Activated B cell treated with CpG ODN at 0.5 μM for 24 hours (primary cell): ENCODE measurements at regions of chr15 and their contacts with region 1.

Region 1: GRCh38 chr15:99565299-99566156 is at the start of gene MEF2A:
- DNase-seq: peak; percentile 90
- ATAC-seq: peak; percentile 65
- H3K4me3 Mint-ChIP-seq: peak within 1 kb of the TSS; percentile 100
- H3K27ac Mint-ChIP-seq: peak within 1 kb of the TSS; percentile 99
- H3K4me1 Mint-ChIP-seq: peaks cover 55% of the 10 kb centered on the region
- H3K27me3 Mint-ChIP-seq: no peaks in the 10 kb centered on the region
- CTCF ChIP-seq: no peak
- total RNA-seq, gene MEF2A: 75.7 and 88.3 TPM in 2 replicates

Region 2: GRCh38 chr15:99282121-99282520 is 283.4 kb before region 1 on chr15:
- CTCF ChIA-PET with region 1: interaction called, 4 read pairs
- POLR2A ChIA-PET with region 1: no interaction called
- intact Hi-C with region 1: loop called (anchors 5 kb)
- DNase-seq: no peak
- ATAC-seq: no peak
- H3K4me3 Mint-ChIP-seq: no peak overlapping the region
- H3K27ac Mint-ChIP-seq: no peak overlapping the region
- H3K4me1 Mint-ChIP-seq: peaks cover 11% of the 10 kb centered on the region
- H3K27me3 Mint-ChIP-seq: no peaks in the 10 kb centered on the region
- CTCF ChIP-seq: no peak

Region 3: GRCh38 chr15:99442252-99442897 is 123.2 kb before region 1 on chr15:
- CTCF ChIA-PET with region 1: no interaction called
- POLR2A ChIA-PET with region 1: interaction called, 6 read pairs
- intact Hi-C with region 1: loop called (anchors 5 kb)
- DNase-seq: peak; percentile 14
- ATAC-seq: peak; percentile 64
- H3K4me3 Mint-ChIP-seq: peak overlapping the region; percentile 53
- H3K27ac Mint-ChIP-seq: peak overlapping the region; percentile 52
- H3K4me1 Mint-ChIP-seq: peaks cover 37% of the 10 kb centered on the region
- H3K27me3 Mint-ChIP-seq: no peaks in the 10 kb centered on the region
- CTCF ChIP-seq: no peak

Region 4: DNA sequence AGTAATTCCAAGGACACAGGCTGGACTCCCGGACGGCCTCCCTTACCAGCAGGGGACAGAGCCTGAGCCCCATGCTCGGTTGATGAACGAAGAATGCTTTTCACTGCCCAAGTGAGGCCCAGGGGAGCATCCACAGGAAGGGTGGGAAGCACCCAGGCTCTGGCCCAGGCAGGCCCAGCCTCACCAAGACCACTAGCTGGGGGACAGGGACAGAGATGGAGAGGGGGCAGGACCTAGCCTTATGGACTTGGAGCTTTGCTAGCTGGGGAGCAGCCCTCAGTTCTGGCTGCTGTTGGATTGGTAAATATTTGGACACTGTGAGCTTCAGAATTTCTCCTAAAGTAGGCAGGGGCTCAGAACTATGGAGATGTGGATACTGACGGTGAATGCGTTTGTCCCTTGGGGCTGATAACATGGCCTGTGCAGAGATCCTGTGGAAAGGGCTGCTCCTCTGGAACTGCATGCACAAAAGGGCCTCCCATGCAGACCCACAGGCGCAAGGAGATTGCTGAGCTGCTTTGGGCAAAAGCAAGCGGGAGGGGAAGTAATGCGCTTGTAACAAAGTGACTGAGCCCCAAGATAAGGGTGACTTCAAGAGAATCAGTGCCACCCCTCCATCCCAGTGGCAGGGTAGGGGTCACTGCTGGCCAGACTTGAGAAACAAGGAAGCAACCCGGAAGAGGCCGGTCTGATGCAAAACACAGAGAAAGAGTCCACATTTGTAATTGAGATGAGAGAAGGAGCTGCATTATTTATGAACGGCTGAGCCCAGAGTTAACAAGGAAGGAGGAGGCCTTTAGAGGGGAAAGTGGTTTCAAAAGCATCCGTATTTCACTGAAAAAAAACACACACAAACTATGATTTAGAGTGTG is 69.9 kb before region 1 on chr15:
- CTCF ChIA-PET with region 1: interaction called, 3 read pairs
- POLR2A ChIA-PET with region 1: interaction called, 157 read pairs
- intact Hi-C with region 1: no loop called
- DNase-seq: no peak
- ATAC-seq: peak; percentile 28
- H3K4me3 Mint-ChIP-seq: peak overlapping the region; percentile 59
- H3K27ac Mint-ChIP-seq: peak overlapping the region; percentile 63
- H3K4me1 Mint-ChIP-seq: peaks cover 27% of the 10 kb centered on the region
- H3K27me3 Mint-ChIP-seq: no peaks in the 10 kb centered on the region
- CTCF ChIP-seq: no peak

Region 5: DNA sequence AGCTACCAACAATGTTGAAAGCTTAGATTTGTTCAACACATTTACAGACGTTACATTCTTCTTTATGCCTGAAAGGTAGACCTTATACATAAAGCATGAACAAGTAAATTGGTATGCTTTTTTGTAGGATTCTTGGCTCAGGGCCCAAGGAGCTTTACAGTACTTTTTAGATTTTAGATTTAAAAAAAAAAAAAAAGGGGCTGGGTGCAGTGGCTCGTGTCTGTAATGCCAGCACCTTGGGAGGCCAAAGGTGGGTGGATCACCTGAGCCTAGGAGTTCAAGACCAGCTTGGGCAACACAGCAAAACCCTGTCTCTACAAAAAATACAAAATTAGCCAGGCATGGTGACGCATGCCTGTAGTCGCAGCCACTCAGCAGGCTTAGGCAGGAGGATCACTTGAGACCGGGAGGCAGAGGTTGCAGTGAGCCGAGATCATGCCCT is 40.0 kb after region 1 on chr15:
- CTCF ChIA-PET with region 1: no interaction called
- POLR2A ChIA-PET with region 1: interaction called, 12 read pairs
- intact Hi-C with region 1: loop called (anchors 2 kb)
- DNase-seq: no peak
- ATAC-seq: no peak
- H3K4me3 Mint-ChIP-seq: peak overlapping the region; percentile 55
- H3K27ac Mint-ChIP-seq: peak overlapping the region; percentile 67
- H3K4me1 Mint-ChIP-seq: peaks cover 73% of the 10 kb centered on the region
- H3K27me3 Mint-ChIP-seq: no peaks in the 10 kb centered on the region
- CTCF ChIP-seq: no peak

Region 6: DNA sequence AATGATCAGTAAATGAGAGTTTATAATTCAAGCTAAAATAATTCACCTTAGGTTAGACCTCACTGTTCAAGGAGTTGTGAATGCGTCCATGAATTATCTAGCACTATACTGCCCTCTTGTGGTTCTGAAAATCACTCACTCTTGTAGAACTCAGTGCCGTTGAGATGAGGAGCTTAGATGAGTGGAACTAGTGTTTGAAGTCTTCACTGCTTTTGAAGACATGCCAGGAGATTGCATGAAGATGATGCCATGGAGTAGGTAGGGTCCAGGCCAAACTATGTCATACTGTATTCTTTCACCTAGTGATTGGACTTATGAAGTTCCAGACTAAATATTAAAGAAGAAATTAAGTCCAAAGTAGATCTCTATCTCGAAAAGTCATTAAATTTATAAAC is 138.9 kb after region 1 on chr15:
- CTCF ChIA-PET with region 1: interaction called, 35 read pairs
- POLR2A ChIA-PET with region 1: interaction called, 45 read pairs
- intact Hi-C with region 1: loop called (anchors 1 kb)
- DNase-seq: no peak
- ATAC-seq: peak; percentile 83
- H3K4me3 Mint-ChIP-seq: no peak overlapping the region
- H3K27ac Mint-ChIP-seq: peak overlapping the region; percentile 24
- H3K4me1 Mint-ChIP-seq: peaks cover 27% of the 10 kb centered on the region
- H3K27me3 Mint-ChIP-seq: no peaks in the 10 kb centered on the region
- CTCF ChIP-seq: no peak

Region 7: GRCh38 chr15:99878835-99879234 is 313.3 kb after region 1 on chr15:
- CTCF ChIA-PET with region 1: no interaction called
- POLR2A ChIA-PET with region 1: no interaction called
- intact Hi-C with region 1: no loop called
- DNase-seq: no peak
- ATAC-seq: no peak
- H3K4me3 Mint-ChIP-seq: no peak overlapping the region
- H3K27ac Mint-ChIP-seq: no peak overlapping the region
- H3K4me1 Mint-ChIP-seq: no peaks in the 10 kb centered on the region
- H3K27me3 Mint-ChIP-seq: no peaks in the 10 kb centered on the region
- CTCF ChIP-seq: no peak